ENCODE measurements at regions of chr10 and their contacts with region 1.

Region 1: DNA sequence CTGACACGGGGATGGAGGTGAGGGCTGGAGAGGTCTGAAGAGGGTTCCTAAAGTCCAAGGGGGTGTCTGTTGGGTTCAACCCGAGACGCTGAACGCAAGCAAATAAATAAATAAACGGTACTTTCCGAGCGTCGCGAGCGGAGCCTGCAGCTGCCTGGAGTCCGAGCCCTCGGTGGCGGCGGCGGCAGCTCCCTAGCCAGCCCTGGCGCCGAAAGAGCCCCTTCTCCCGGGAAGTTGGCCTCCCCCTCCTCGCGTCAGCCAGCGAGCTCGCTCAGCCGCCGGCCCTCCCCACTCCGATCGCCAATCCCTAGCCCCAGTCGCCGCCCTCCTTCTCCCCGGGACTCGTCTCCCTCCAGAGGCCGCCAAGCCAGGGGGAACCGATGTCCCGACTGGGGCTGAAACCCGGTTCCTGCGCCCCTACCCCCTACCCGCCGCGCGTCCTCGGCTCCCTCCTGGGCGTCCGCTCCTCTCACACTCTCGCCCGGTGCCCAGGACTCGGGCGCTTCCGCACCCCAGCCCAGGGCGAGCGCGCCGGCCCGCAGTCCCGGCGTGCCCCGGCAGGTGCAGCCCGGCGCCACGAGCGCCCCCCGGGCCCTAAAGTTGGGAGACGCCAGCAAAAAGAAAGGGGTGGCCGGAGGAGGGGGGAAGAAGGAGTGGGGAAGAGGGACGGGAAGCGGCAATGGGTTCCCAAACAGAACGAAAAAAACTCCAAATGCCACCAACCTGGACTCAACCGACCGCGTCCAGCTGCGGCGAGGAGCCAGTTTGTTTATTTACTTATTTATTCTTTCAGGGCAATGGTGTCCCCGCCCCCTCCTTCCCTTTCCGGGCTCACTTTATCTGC is at the start of gene GFRA1:
- DNase-seq: no peak
- H3K4me3 ChIP-seq: peak within 1 kb of the TSS; percentile 66 to 69
- H3K27ac ChIP-seq: peak within 1 kb of the TSS; percentile 27 to 57
- H3K4me1 ChIP-seq: peaks cover 0 to 6% of the 10 kb centered on the region in 2 donors
- H3K27me3 ChIP-seq: no peaks in the 10 kb centered on the region
- CTCF ChIP-seq: peak in 1 of 3 experiments; percentile 2
- total RNA-seq, gene GFRA1: 7.0 TPM

Region 2: DNA sequence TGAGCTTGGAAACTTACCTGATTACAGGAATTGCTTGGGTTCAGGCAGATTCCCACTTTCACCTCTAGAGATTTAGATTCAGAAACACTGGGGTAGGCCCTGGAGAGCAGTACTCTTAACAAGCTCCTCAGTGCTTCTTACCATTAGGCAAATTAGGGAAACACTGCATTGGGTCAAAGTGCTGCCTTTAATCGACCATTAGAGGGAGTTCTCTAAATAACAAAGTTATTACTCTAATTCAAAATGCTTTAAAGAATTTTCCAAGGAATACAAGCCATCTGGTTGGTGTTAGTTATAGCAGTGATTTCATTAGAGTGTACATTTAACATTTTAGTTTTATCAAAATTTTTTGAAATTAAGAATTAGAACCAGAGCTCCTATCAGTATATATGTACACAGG is 324.2 kb before region 1 on chr10:
- intact Hi-C with region 1: loop called (anchors 5 kb)
- DNase-seq: no peak
- H3K4me3 ChIP-seq: no peak overlapping the region
- H3K27ac ChIP-seq: no peak overlapping the region
- H3K4me1 ChIP-seq: peaks cover 4 to 8% of the 10 kb centered on the region in 2 donors
- H3K27me3 ChIP-seq: no peaks in the 10 kb centered on the region
- CTCF ChIP-seq: peak; percentile 12 to 47 (median 23)

Region 3: DNA sequence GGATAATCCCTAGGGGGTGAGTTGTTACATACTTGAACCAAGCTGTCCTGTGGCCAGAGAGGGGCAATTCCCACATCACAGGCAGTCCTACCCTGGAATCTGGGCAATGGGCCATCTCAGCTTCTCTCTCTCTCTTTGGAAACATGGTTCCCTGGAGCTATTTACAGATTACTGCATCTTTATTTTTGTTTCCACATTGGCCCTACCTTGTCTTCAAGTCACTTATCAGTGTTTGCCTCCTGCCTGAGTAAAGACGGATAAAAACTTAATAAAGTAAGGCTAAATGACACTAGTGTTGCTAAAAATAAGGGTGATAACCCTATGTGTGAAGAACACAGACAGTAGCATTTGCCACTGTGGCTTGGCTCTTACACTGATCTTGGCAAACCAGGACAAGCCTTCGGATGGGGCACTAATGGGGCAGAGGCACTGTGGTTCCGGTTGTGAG is 227.8 kb before region 1 on chr10:
- intact Hi-C with region 1: loop called (anchors 10 kb)
- DNase-seq: peak in 1 of 2 donors; percentile 73
- H3K4me3 ChIP-seq: peak overlapping the region in 1 of 2 donors; percentile 2
- H3K27ac ChIP-seq: no peak overlapping the region
- H3K4me1 ChIP-seq: peaks cover 0 to 14% of the 10 kb centered on the region in 2 donors
- H3K27me3 ChIP-seq: no peaks in the 10 kb centered on the region
- CTCF ChIP-seq: no peak

Region 4: GRCh38 chr10:116457488-116457887 is 184.8 kb after region 1 on chr10:
- intact Hi-C with region 1: no loop called
- DNase-seq: no peak
- H3K4me3 ChIP-seq: no peak overlapping the region
- H3K27ac ChIP-seq: no peak overlapping the region
- H3K4me1 ChIP-seq: no peaks in the 10 kb centered on the region
- H3K27me3 ChIP-seq: no peaks in the 10 kb centered on the region
- CTCF ChIP-seq: no peak

Measured in ascending aorta (tissue), 2 donors.